MCF 10A (cell line): ENCODE measurements at regions of chr7 and their contacts with region 1.

Region 1: GRCh38 chr7:127514499-127514898 is 70.9 kb downstream of the GCC1 start:
- DNase-seq: peak; percentile 48
- H3K4me3 Mint-ChIP-seq: no peak overlapping the region
- H3K27ac Mint-ChIP-seq: no peak overlapping the region
- H3K4me1 Mint-ChIP-seq: no peaks in the 10 kb centered on the region
- H3K27me3 Mint-ChIP-seq: peaks cover 57% of the 10 kb centered on the region
- CTCF ChIP-seq: peak; percentile 47

Region 2: DNA sequence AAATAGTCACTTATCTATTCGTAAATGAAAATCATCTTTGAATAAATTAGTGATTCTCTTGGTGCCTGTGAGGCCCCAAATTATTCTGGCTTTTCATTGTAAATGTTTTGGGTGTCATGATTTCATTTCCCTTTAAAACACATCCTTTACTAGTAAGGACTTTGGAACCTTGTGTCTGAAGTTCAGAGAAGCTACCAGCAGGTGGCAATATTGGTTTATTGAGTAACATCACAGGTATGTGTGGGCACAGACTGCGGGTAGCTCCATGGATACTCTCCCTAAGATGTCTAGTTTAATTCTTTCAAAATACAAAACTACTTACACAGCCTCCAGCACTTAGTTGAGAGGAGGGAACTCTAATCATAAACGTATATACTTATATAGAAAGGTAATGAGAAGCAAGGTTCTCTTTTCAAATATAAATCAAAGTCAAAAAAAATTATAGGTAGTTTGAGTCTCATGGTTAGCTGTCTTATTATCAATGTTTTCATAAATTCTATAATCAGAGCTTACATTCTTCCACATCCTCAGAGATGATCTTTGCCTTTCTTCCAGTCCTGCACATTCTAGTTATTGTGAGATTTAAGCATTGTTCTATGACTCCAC is 711.3 kb before region 1 on chr7:
- CTCF ChIA-PET with region 1: interaction called, 17 read pairs
- POLR2A ChIA-PET with region 1: no interaction called
- intact Hi-C with region 1: loop called (anchors 1 kb)
- DNase-seq: peak; percentile 74
- H3K4me3 Mint-ChIP-seq: no peak overlapping the region
- H3K27ac Mint-ChIP-seq: no peak overlapping the region
- H3K4me1 Mint-ChIP-seq: no peaks in the 10 kb centered on the region
- H3K27me3 Mint-ChIP-seq: peaks cover 25% of the 10 kb centered on the region
- CTCF ChIP-seq: peak; percentile 78

Region 3: DNA sequence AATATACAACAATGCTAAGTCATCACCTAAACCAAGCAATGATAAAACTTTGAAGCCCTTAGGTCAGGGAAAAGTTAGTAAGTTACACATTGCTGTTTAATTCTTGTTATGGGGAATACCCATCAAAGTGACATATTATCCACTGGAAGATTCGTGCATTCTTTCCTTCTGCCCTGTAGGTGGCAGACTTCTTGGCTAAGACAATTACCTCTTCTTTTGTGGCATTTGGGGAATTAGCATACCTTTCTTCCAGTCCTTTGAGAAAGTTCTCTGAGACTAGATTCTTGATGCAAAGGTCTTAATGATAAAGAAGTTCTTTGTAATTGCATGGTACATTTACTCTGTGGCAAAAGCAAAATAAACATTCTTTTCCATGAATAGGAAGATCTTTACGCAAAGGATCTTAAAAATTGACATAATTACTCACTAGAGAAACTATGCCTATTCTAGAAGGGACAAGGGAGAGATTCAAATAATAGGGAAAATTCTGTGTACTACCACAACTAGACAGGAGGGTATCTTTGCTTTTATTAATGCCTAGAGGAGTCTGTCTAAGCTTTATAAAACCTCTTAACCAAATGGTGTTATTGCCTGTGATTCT is 657.7 kb before region 1 on chr7:
- CTCF ChIA-PET with region 1: no interaction called
- POLR2A ChIA-PET with region 1: no interaction called
- intact Hi-C with region 1: loop called (anchors 5 kb)
- DNase-seq: peak; percentile 31
- H3K4me3 Mint-ChIP-seq: no peak overlapping the region
- H3K27ac Mint-ChIP-seq: no peak overlapping the region
- H3K4me1 Mint-ChIP-seq: no peaks in the 10 kb centered on the region
- H3K27me3 Mint-ChIP-seq: peaks cover 64% of the 10 kb centered on the region
- CTCF ChIP-seq: peak; percentile 56

Region 4: DNA sequence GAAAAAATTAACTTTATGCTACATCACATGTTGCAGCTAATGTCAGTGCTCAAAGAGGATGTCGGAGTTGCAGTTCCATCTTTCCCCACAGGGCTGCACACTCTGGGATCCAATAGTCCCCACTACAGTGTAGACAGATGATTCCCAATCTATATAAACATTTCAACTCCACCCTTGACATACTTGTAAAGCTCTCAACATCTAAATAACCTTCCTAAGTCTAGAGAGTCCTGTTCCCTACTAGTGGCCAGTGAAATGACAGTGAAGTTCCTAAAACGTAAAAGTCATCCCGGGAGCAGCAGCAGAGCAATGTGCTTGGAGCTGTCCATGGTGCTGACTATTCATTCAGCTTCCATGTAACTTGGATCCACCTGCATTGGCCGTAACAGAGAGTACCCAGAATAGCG is 406.9 kb before region 1 on chr7:
- CTCF ChIA-PET with region 1: no interaction called
- POLR2A ChIA-PET with region 1: no interaction called
- intact Hi-C with region 1: loop called (anchors 1 kb)
- DNase-seq: peak; percentile 81
- H3K4me3 Mint-ChIP-seq: no peak overlapping the region
- H3K27ac Mint-ChIP-seq: no peak overlapping the region
- H3K4me1 Mint-ChIP-seq: no peaks in the 10 kb centered on the region
- H3K27me3 Mint-ChIP-seq: no peaks in the 10 kb centered on the region
- CTCF ChIP-seq: peak; percentile 67

Region 5: DNA sequence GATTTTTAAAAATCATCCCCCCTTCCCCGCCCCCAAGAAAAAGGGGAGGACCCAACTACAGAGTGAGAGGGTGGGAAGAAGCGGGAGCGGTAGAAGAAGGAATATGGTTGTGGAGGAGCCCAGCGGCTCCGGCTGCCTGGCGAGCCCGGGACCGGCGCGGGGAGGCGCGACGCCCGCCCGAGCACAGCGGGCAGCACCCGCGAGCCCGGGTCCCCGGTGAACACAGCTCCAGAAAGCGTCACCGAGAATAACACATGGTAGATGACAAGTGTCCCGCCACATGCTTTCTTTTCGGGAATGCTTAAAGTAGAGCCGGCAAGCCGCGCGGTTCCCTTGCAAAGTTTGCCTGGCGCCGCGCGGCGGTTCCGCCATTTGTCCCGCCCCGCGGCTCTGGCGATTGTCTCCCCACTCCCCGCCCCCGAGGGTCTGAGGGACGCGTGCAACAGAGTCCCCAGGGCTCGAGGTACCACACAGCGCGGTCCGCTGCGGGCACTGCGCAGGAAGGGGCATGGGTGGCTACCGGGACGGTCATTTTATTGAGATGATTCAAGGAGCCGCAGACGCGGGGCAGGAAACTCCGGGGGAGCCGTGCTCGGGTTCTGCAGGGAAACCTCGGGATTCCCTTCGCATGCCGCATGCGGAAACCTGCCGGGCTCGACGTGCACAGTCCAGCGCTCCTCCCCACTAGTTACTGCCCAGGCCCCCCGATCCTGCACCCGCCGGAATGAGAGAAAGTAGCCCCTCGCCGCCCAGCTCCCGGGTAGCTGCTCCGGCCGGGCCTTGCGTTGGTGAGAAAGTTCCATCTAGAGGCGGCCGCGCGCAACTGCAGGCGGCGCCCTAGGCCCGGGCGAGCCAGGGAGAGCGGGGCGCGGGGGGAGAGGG is 261.0 kb before region 1 on chr7:
- CTCF ChIA-PET with region 1: interaction called, 4 read pairs
- POLR2A ChIA-PET with region 1: no interaction called
- intact Hi-C with region 1: loop called (anchors 1 kb)
- DNase-seq: peak; percentile 47
- H3K4me3 Mint-ChIP-seq: peak overlapping the region; percentile 77
- H3K27ac Mint-ChIP-seq: no peak overlapping the region
- H3K4me1 Mint-ChIP-seq: peaks cover 8% of the 10 kb centered on the region
- H3K27me3 Mint-ChIP-seq: peaks cover 63% of the 10 kb centered on the region
- CTCF ChIP-seq: peak; percentile 94

Region 6: DNA sequence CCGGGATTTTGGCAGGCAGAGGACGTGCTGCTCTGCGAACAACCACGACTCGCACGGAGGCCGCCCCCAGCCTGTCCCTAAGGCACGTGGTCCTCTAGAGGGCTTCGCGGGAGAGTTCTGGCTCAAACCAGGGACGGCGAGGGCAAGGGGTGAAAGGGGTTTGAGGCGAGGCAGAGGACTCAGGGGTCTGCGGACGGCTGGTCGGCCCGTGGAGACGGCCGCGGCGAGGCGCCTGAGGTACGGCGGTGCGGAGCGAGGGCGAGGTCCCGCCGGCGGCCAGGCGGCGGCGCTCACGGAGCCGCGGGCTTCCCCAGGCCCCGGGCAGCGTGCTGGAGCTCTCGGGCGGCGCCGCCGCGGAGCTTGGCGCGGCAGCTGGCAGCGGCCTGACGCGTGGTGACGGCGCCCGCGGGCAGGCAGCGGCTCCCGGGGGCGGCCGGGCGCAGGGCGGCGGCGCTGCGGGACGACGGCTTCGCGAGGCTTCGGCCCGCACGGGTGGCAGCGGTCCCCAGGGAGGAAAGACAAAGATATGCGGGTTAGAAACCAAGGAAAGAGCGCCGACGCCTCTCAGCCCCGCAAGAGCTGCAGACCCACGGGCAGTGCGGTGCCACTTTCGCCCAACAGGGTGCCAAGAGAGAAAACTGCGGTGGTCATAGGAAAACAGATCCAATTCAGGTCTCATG is 166.8 kb before region 1 on chr7:
- CTCF ChIA-PET with region 1: interaction called, 3 read pairs
- POLR2A ChIA-PET with region 1: no interaction called
- intact Hi-C with region 1: loop called (anchors 10 kb)
- DNase-seq: no peak
- H3K4me3 Mint-ChIP-seq: peak overlapping the region; percentile 50
- H3K27ac Mint-ChIP-seq: peak overlapping the region; percentile 42
- H3K4me1 Mint-ChIP-seq: no peaks in the 10 kb centered on the region
- H3K27me3 Mint-ChIP-seq: no peaks in the 10 kb centered on the region
- CTCF ChIP-seq: peak; percentile 23

Region 7: DNA sequence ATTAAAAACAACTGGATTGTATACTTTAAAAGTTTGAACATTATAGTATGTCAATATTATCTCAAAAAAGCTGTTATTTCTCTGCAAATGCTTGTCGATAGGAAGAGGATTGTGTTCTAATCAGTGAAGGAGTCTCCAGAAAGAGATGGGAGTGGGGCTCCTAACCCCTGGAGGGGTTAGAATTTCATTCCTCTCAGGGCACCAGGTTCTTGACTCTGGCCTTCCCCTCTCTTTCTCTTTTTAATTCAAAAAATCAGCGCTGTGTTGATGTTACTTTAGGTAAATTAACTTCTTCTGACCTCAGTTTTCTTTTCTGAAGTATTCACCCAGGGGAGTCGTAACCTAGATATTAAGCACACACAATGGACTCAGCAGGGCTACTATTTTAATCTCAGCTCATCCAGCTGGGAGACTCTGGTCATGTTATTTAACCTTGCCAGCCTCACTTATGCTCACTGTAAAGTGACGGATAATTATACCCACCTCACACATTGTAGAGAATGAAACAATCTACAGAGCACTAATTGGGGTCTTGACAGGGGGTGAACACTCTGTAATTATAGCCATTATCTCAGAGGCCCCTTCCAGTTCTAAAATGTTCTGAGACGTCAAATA is 11.5 kb after region 1 on chr7:
- CTCF ChIA-PET with region 1: interaction called, 10 read pairs
- POLR2A ChIA-PET with region 1: no interaction called
- intact Hi-C with region 1: no loop called
- DNase-seq: no peak
- H3K4me3 Mint-ChIP-seq: no peak overlapping the region
- H3K27ac Mint-ChIP-seq: no peak overlapping the region
- H3K4me1 Mint-ChIP-seq: no peaks in the 10 kb centered on the region
- H3K27me3 Mint-ChIP-seq: peaks cover 53% of the 10 kb centered on the region
- CTCF ChIP-seq: no peak